ENCODE measurements at regions of chr2 and their contacts with region 1.

Region 1: DNA sequence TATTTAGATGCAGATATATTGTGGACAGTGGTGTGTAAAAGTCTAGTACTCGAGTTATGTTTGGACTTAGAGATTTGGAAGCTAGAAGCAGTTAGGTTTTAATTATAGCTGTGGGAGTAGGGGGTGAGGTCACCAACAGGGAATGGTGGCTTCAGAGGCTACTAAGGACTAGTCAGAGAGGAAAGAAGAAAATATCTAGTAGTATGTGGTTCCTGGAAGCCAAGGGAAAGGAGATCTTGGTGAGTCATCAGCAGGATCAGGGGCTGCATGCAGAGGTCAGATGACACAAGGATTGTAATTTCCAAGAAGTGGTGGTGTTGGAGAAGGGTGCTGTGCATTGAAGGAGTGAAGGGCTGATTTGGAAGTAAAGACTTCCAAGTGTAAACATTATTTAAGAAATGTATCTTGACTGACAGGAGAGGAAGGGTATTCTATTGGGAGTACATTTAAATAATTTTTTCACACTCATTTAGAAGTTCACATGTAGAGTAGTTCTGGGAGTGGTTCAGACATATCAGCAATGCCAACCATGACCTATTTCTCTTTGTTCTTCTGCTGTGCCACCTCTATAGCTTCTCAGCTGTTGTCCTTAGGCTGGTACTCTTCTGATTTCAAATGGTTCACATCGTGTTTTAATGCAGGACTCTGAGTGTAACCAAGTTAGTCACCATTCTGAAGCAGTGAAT is 59.1 kb downstream of the ACSL3 start:
- DNase-seq: peak; percentile 78
- H3K4me3 ChIP-seq: no peak overlapping the region
- H3K27me3 ChIP-seq: no peaks in the 10 kb centered on the region
- CTCF ChIP-seq: no peak

Region 2: GRCh38 chr2:222819722-222820333 is 100.2 kb before region 1 on chr2:
- CTCF ChIA-PET with region 1: no interaction called
- POLR2A ChIA-PET with region 1: no interaction called
- DNase-seq: peak; percentile 52
- H3K4me3 ChIP-seq: no peak overlapping the region
- H3K27me3 ChIP-seq: no peaks in the 10 kb centered on the region
- CTCF ChIP-seq: no peak

Region 3: GRCh38 chr2:222939208-222939856 is 19.3 kb after region 1 on chr2:
- CTCF ChIA-PET with region 1: interaction called, 18 read pairs
- POLR2A ChIA-PET with region 1: no interaction called
- DNase-seq: no peak
- H3K4me3 ChIP-seq: no peak overlapping the region
- H3K27me3 ChIP-seq: no peaks in the 10 kb centered on the region
- CTCF ChIP-seq: peak; percentile 84

Measured in BJ (cell line).